ENCODE measurements at regions of chr6 and their contacts with region 1.

Region 1: DNA sequence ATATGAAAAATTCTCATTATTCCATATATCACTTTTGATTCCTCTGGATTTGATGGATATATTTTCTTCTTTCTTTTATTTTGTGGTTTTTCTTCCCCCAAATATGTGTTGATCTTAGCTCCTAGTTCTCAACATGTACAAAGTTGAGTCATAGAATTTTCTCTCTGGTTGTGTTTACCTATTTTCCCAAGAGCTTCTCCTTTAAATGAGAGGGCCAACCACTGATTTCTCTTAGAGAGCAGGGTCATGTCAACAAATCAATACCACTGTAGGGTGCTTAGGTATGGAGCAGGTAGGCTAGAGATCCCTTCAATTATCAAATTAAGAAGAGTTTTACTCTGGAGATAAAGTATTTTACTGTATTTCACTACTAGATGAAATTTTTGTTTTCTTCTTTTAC is 145.7 kb downstream of the BMP5 start:
- DNase-seq: no peak
- H3K4me3 ChIP-seq: no peak overlapping the region
- CTCF ChIP-seq: no peak

Region 2: GRCh38 chr6:55266896-55267295 is 462.8 kb before region 1 on chr6:
- in situ Hi-C with region 1: loop called (anchors 10 kb)
- DNase-seq: no peak
- H3K4me3 ChIP-seq: no peak overlapping the region
- CTCF ChIP-seq: no peak